ENCODE measurements at regions of chr5 and their contacts with region 1.

Region 1: DNA sequence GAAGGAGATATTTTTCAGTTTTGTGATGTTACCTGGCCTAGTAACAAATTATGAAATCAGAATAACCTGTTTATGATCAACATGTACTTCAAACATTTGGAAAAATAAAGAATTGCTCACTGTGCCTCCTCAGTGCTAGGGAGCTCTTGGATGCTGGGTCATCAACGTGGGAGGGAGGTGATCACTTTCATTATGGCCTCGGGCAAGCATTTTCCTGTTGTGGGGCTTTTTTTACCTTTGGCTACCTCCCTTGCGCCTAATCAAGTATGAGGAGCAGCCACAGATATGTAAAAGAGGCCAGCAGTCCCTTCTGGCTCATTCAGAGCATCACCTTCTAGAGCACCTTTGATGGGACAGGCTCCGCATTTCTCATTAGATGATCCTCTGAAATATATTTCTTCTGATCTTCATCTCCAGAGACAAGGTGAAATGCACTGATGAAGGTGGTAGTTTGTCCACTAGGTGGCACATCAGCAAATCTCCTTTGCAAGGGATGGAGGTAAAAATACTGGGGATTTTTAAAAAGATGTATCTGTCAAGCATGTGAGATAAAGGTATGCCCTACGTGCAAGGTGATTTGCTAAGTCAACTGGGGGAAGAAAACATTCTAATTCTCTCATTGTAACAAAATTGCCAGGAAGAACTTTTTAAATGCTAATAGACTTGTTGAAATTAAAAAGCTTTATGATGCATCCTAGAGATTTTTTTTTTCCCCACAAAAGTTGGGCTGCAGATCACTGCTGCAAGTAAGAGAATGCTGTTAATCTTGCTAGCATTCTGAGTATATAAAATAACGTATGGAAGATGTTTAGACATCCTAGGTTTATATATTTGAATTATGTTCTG is 218.2 kb downstream of the MAST4 start:
- DNase-seq: no peak
- H3K4me3 ChIP-seq: no peak overlapping the region
- H3K27me3 ChIP-seq: no peaks in the 10 kb centered on the region
- CTCF ChIP-seq: peak; percentile 71

Region 2: GRCh38 chr5:66828548-66829357 is 14.4 kb after region 1 on chr5:
- CTCF ChIA-PET with region 1: interaction called, 11 read pairs
- POLR2A ChIA-PET with region 1: no interaction called
- DNase-seq: no peak
- H3K4me3 ChIP-seq: peak overlapping the region; percentile 26
- H3K27me3 ChIP-seq: peaks cover 13% of the 10 kb centered on the region
- CTCF ChIP-seq: no peak

Region 3: DNA sequence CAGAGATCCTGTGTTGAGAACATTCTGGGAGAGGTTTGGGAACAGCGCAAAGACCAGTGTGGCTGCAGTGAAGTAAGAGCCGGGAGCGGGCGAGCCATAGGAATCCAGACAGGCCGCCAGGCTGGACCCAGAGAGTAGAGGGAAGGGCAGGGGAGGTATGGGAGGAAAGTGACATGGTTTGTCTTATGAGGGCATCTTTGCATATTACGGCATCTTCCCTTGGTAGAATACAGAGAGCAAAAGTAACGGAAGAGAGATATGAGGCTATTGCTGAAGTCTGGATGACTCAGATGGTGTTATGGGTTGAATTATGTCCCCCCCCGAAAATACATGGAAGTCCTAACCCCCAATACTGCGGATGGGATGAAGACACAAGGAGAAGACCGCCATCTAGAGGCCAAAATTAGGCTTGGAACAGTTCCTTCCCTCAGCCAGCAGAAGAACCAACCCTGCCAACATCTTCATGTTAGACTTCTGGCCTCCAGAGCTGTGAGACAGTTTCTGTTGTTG is 50.0 kb after region 1 on chr5:
- CTCF ChIA-PET with region 1: interaction called, 23 read pairs
- POLR2A ChIA-PET with region 1: no interaction called
- DNase-seq: no peak
- H3K4me3 ChIP-seq: no peak overlapping the region
- H3K27me3 ChIP-seq: peaks cover 4% of the 10 kb centered on the region
- CTCF ChIP-seq: peak; percentile 46

Region 4: DNA sequence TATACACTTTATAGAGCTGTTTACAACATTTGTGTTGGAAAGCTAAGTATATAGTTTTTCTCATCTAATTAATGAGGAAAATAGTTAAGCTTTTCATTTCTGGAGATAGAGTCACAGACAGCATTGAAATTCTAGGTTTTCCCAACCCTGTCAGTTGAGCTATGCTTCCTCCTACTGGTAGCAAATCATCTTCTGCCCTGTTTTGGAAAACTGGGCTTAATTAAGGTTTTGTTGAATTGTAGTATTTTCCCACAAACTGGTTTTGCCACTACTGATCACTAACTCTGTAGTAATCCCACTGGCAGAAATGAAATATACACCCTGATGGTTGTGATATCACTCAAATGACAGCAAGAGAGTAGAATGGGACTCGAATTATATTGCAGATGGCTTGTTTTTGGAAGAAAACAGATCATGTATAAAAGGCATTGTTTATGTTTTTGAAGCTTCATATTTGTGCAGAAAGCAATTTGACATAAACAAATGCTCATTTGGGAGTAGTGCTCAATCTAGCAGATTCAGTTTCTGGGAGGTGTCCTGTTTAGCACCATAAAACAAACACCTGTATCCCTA is 335.7 kb after region 1 on chr5:
- CTCF ChIA-PET with region 1: interaction called, 46 read pairs
- POLR2A ChIA-PET with region 1: no interaction called
- DNase-seq: no peak
- H3K4me3 ChIP-seq: no peak overlapping the region
- H3K27me3 ChIP-seq: no peaks in the 10 kb centered on the region
- CTCF ChIP-seq: peak; percentile 68

Measured in BJ (cell line).